ENCODE measurements at regions of chr11 and their contacts with region 1.

Region 1: GRCh38 chr11:8604078-8604723 is 10.2 kb upstream of the STK33 start:
- DNase-seq: peak; percentile 53
- H3K4me3 ChIP-seq: no peak overlapping the region
- H3K27ac ChIP-seq: no peak overlapping the region
- H3K4me1 ChIP-seq: no peaks in the 10 kb centered on the region
- H3K27me3 ChIP-seq: peaks cover 0 to 1% of the 10 kb centered on the region in 2 experiments
- CTCF ChIP-seq: peak; percentile 67 to 72
- POLR2A ChIP-seq: no peak

Region 2: DNA sequence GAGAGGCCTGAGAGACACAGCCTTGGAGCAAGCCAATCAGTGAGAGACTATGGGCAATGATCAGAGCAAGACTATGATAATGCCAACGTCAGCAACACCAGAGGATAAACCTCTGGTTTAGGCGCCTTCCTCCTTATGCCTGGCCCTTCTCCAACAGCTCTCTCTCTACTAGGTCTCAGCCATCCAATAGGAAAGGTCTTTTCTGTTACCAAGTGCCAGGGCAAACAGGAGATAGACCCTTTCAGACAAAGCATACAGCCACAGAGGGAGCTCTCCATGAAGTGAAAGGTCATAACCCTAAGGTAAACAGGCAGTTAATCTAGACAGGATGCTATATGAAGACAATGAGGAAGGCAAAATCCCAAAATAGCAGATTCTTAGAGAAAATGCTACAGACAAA is 19.7 kb before region 1 on chr11:
- CTCF ChIA-PET with region 1: interaction called, 3 read pairs
- POLR2A ChIA-PET with region 1: interaction called, 13 read pairs
- dilution Hi-C with region 1: no loop called
- intact Hi-C with region 1: no loop called
- DNase-seq: no peak
- H3K4me3 ChIP-seq: no peak overlapping the region
- H3K27ac ChIP-seq: no peak overlapping the region
- H3K4me1 ChIP-seq: no peaks in the 10 kb centered on the region
- H3K27me3 ChIP-seq: peaks cover 2 to 6% of the 10 kb centered on the region in 2 experiments
- CTCF ChIP-seq: no peak
- POLR2A ChIP-seq: no peak

Region 3: GRCh38 chr11:8621147-8621546 is 16.9 kb after region 1 on chr11:
- CTCF ChIA-PET with region 1: no interaction called
- POLR2A ChIA-PET with region 1: no interaction called
- dilution Hi-C with region 1: no loop called
- intact Hi-C with region 1: no loop called
- DNase-seq: no peak
- H3K4me3 ChIP-seq: no peak overlapping the region
- H3K27ac ChIP-seq: no peak overlapping the region
- H3K4me1 ChIP-seq: no peaks in the 10 kb centered on the region
- H3K27me3 ChIP-seq: no peaks in the 10 kb centered on the region
- CTCF ChIP-seq: no peak
- POLR2A ChIP-seq: no peak

Region 4: DNA sequence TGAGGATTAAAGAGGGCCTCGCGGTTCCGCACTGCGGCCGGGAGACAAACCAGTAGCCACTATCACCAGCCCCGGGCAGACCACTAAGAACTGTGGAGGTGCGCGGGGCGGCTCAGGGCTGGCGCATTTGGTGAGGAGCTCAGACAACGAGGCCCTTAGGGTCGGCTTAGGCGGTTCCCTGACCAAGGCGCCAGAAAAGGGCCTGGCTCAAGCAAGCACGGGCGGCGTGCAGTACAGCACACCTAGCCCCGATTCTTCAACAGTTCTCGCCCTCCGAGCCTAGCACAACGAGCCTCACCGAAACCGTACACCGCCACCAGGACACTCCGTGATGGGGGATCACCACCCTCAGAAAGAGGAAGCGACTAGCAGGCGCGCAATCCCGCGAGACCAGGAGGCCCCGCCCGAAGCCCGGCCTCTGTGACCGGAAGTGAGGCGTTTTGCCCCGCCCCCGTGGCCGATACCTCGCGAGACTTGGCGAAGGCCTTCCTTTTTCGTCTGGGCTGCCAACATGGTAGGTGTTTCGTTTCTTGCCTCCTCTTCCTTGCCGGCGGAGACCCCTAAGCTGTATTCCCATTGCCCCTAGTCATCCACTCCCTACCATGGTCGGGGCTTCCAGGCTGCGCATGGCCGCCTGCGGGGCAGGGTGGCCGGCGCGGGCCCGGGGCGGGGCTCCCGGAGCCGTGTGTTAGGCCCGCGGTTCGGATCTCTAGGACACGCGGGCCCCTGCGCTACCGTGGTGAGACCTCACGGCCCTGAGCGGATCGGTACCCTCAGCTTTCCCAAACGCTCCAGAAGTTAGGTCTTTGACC is 78.3 kb after region 1 on chr11 and contains the starts of genes RPL27A and TRIM66:
- CTCF ChIA-PET with region 1: interaction called, 4 read pairs
- POLR2A ChIA-PET with region 1: no interaction called
- dilution Hi-C with region 1: no loop called
- intact Hi-C with region 1: loop called (anchors 5 kb)
- DNase-seq: peak; percentile 97
- H3K4me3 ChIP-seq: peak within 1 kb of the TSS; percentile 58 to 92 (median 88)
- H3K27ac ChIP-seq: peak within 1 kb of the TSS; percentile 86
- H3K4me1 ChIP-seq: peaks cover 30% of the 10 kb centered on the region
- H3K27me3 ChIP-seq: no peaks in the 10 kb centered on the region
- CTCF ChIP-seq: peak in 1 of 2 donors; percentile 7
- POLR2A ChIP-seq: peak; percentile 100
- total RNA-seq, gene RPL27A: 952 and 1,303 TPM in 2 replicates
- total RNA-seq, gene TRIM66: 8.6 and 11.7 TPM in 2 replicates

Measured in endothelial cell of umbilical vein (primary cell).